Heart left ventricle (tissue), 16 donors: ENCODE measurements at regions of chr5 and their contacts with region 1.

Region 1: DNA sequence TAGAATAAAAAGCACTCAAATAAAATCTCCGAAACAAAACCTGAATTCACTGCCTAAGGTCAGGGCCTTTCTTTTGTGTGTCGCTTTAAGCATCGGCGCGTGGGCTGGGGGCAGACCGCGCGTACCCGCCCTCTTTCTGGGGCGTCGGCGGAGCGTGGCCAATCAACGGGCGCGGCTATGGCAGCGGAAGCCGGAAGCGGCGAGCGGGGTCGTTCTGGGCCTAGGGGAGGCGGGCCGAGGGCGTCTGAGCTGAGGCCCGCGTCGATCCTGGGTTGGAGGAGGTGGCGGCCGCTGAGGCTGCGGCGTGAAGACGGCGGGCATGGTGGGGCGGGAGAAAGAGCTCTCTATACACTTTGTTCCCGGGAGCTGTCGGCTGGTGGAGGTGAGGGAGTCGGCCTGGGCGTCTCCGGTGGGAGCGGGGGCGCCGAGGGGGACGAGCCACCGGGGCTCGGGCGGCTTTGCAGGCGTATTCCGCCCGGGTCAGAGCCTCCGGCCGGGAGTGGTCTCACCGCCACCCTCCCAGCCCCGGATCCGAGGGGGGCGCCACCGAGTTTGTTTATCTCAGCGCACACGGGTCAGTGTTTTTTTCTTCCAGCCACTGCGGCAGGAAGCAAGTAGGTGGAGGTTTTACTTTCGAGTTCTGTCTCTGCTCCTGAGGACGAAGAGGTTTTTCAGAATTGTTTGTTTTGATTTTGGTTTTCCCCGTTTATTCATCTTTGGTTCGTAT is at the start of gene MAT2B:
- DNase-seq: peak; percentile 97 to 98 (median 97)
- ATAC-seq: peak; percentile 97 to 98 (median 98)
- H3K4me3 ChIP-seq: peak within 1 kb of the TSS; percentile 18 to 90 (median 77)
- H3K27ac ChIP-seq: peak within 1 kb of the TSS; percentile 89 to 99 (median 96)
- H3K4me1 ChIP-seq: peaks cover 11 to 61% (median 45%) of the 10 kb centered on the region in 12 donors
- H3K27me3 ChIP-seq: no peaks in the 10 kb centered on the region
- CTCF ChIP-seq: peak; percentile 33 to 75 (median 55)
- POLR2A ChIP-seq: peak; percentile 14 to 90
- total RNA-seq, gene MAT2B: 46.3 to 61.6 (median 59.3) TPM

Region 2: DNA sequence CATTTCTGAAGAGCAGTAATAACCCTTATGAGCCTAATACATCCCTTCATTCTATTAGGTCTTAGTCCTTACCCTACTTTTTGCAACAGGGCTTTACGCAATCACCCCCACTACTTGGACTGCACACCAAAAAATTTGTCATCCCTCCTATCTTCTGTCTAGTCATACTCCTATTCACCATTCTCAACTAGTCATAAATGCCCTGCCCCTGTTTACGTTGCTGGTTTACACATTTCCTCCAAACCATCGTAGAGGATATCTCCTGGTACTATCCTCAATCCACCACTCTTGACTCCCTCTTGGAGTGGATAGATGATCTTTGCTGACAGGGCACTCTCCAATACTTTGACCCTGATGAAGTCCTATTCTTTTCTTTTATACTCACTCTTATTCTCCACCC is 166.4 kb before region 1 on chr5:
- intact Hi-C with region 1: no loop called
- DNase-seq: no peak
- ATAC-seq: no peak
- H3K4me3 ChIP-seq: no peak overlapping the region
- H3K27ac ChIP-seq: no peak overlapping the region
- H3K4me1 ChIP-seq: no peaks in the 10 kb centered on the region
- H3K27me3 ChIP-seq: no peaks in the 10 kb centered on the region
- CTCF ChIP-seq: no peak
- POLR2A ChIP-seq: no peak

Region 3: GRCh38 chr5:163459922-163460766 is 45.4 kb before region 1 on chr5 and contains the starts of genes HMMR and NUDCD2:
- intact Hi-C with region 1: loop called in 9 of 10 experiments (anchors 1 to 5 kb)
- DNase-seq: peak; percentile 94 to 99 (median 96)
- ATAC-seq: peak; percentile 95 to 98 (median 97)
- H3K4me3 ChIP-seq: peak within 1 kb of the TSS; percentile 36 to 94 (median 75)
- H3K27ac ChIP-seq: peak within 1 kb of the TSS; percentile 84 to 99 (median 94)
- H3K4me1 ChIP-seq: peaks cover 0 to 30% (median 23%) of the 10 kb centered on the region in 12 donors
- H3K27me3 ChIP-seq: no peaks in the 10 kb centered on the region
- CTCF ChIP-seq: peak in 5 of 12 donors; percentile 13 to 48 (median 33)
- POLR2A ChIP-seq: peak; percentile 17 to 85
- total RNA-seq, gene HMMR: 0.47 to 6.6 (median 1.3) TPM in 8 of 9 donors, not detected in the other
- total RNA-seq, gene NUDCD2: 1.6 to 17.1 (median 13.4) TPM

Region 4: DNA sequence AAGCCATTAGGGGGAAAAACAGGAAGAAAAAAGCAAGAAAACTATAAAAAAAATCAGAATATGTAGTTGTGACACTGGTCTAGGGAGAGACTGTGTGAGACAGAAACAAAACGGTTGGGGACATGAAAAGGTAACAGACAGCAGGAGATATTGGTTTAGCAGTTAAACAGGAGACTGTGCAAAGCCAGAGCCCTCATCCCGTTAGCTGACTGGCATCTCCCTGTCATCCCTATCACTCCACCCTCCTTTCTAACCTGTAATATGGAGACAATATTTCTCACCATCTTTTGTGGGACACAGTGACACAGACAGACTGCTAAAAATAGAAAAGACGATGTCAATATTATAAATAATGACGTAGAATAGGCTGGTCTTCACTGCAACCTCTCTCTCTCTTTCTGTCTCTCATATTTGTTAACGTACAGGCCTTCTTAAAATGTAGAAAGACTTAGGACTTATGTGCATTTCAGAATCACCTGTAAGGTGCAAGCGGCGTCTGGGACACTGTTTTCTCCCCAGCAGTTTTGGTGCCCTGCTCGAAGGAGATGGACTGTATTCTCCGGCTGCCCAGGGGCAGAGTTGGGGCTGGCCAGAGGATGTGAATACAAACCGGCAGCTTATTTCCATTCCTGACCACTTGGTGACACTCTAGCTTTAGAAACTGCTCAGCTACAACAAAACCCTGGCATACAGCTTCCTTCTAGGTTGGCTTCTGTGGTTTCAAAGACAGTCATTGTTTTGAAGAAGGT is 190.5 kb after region 1 on chr5:
- intact Hi-C with region 1: no loop called
- DNase-seq: peak in 1 of 5 donors; percentile 6
- ATAC-seq: peak in 3 of 4 donors; percentile 41 to 79 (median 62)
- H3K4me3 ChIP-seq: no peak overlapping the region
- H3K27ac ChIP-seq: no peak overlapping the region
- H3K4me1 ChIP-seq: no peaks in the 10 kb centered on the region
- H3K27me3 ChIP-seq: no peaks in the 10 kb centered on the region
- CTCF ChIP-seq: peak in 11 of 12 donors; percentile 21 to 55 (median 39)
- POLR2A ChIP-seq: no peak

Region 5: DNA sequence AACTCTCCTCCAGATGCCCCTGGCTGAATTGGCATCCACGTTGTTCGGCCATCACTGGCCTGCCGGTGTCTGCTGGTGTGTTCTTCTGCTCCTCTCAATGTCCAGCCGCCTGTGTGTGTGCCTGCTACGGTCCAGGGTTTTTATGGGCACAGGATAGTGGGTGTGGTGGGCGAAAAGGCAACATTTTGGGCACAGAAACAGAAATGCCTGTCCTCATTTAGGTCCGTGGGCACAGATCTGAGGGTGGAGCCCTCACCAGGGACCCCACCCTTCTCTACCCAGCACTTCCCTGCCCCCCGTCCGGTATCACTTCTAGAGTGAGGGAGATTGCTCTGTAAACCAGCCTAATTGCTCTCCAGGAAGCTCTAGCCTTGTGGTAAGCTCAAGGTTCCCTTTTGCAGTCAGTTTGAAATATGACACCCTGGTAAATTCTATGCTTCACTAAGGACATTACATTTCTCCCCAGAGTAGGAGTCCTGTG is 410.0 kb after region 1 on chr5:
- intact Hi-C with region 1: no loop called
- DNase-seq: no peak
- ATAC-seq: peak in 3 of 4 donors; percentile 13 to 66 (median 34)
- H3K4me3 ChIP-seq: no peak overlapping the region
- H3K27ac ChIP-seq: peak overlapping the region in 1 of 12 donors; percentile 89
- H3K4me1 ChIP-seq: peaks cover 0 to 13% (median 0%) of the 10 kb centered on the region in 12 donors
- H3K27me3 ChIP-seq: no peaks in the 10 kb centered on the region
- CTCF ChIP-seq: no peak
- POLR2A ChIP-seq: no peak